CD8-positive, alpha-beta T cell (primary cell): ENCODE measurements at regions of chr1 and their contacts with region 1.

Region 1: DNA sequence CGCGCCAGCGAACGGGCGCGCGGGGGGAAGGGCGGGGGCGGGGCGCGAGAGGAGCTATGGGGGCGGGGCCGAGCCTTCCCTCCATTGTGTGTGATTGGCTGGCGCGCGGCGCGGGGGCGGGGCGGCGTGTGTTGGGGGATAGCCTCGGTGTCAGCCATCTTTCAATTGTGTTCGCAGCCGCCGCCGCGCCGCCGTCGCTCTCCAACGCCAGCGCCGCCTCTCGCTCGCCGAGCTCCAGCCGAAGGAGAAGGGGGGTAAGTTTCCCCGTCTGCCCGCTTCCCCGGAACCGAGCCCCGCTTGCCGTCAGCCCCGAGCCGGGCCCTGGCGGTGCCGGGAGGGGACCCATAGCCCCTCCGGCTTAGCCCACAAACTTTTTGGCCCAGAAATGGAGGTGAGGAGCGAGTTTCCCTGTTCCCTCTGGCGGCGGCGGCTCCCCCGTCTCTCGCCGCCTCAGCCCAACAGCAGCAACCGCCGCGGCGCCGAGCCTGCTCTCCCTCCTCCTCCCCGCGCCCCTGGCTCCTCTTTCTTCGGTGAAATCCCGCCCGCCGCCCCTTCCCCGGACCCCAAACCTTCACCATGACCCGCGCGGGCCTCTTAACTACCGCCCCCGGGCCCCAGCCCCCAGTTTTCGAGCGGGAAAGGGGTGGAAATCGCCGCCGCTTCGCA is at the start of gene H3-3A:
- DNase-seq: peak; percentile 96 to 99 (median 98)
- ATAC-seq: peak; percentile 85
- H3K4me3 ChIP-seq: peak within 1 kb of the TSS; percentile 84 to 92
- H3K4me3 Mint-ChIP-seq: peak within 1 kb of the TSS; percentile 100
- H3K27ac ChIP-seq: peak within 1 kb of the TSS; percentile 90 to 91
- H3K27ac Mint-ChIP-seq: peak within 1 kb of the TSS; percentile 100
- H3K4me1 ChIP-seq: peaks cover 42% of the 10 kb centered on the region
- H3K4me1 Mint-ChIP-seq: peaks cover 49% of the 10 kb centered on the region
- H3K27me3 ChIP-seq: no peaks in the 10 kb centered on the region
- H3K27me3 Mint-ChIP-seq: no peaks in the 10 kb centered on the region
- CTCF ChIP-seq: no peak
- total RNA-seq, gene H3-3A: 439 to 447 TPM

Region 2: GRCh38 chr1:225428068-225428880 is 634.4 kb before region 1 on chr1:
- CTCF ChIA-PET with region 1: no interaction called
- POLR2A ChIA-PET with region 1: interaction called, 6 read pairs
- intact Hi-C with region 1: loop called (anchors 2 to 5 kb)
- DNase-seq: peak; percentile 80 to 96 (median 91)
- ATAC-seq: peak; percentile 92
- H3K4me3 ChIP-seq: peak overlapping the region; percentile 80 to 89
- H3K4me3 Mint-ChIP-seq: peak overlapping the region; percentile 93
- H3K27ac ChIP-seq: peak overlapping the region; percentile 69 to 70
- H3K27ac Mint-ChIP-seq: peak overlapping the region; percentile 91
- H3K4me1 ChIP-seq: peaks cover 39% of the 10 kb centered on the region
- H3K4me1 Mint-ChIP-seq: peaks cover 44% of the 10 kb centered on the region
- H3K27me3 ChIP-seq: no peaks in the 10 kb centered on the region
- H3K27me3 Mint-ChIP-seq: no peaks in the 10 kb centered on the region
- CTCF ChIP-seq: no peak

Region 3: GRCh38 chr1:225474986-225475820 is 587.5 kb before region 1 on chr1:
- CTCF ChIA-PET with region 1: no interaction called
- POLR2A ChIA-PET with region 1: interaction called, 3 read pairs
- intact Hi-C with region 1: loop called in 1 of 2 experiments (anchors 5 kb)
- DNase-seq: peak; percentile 44 to 90 (median 70)
- ATAC-seq: peak; percentile 86
- H3K4me3 ChIP-seq: no peak overlapping the region
- H3K4me3 Mint-ChIP-seq: no peak overlapping the region
- H3K27ac ChIP-seq: no peak overlapping the region
- H3K27ac Mint-ChIP-seq: no peak overlapping the region
- H3K4me1 ChIP-seq: peaks cover 53% of the 10 kb centered on the region
- H3K4me1 Mint-ChIP-seq: peaks cover 48% of the 10 kb centered on the region
- H3K27me3 ChIP-seq: no peaks in the 10 kb centered on the region
- H3K27me3 Mint-ChIP-seq: no peaks in the 10 kb centered on the region
- CTCF ChIP-seq: peak; percentile 100

Region 4: DNA sequence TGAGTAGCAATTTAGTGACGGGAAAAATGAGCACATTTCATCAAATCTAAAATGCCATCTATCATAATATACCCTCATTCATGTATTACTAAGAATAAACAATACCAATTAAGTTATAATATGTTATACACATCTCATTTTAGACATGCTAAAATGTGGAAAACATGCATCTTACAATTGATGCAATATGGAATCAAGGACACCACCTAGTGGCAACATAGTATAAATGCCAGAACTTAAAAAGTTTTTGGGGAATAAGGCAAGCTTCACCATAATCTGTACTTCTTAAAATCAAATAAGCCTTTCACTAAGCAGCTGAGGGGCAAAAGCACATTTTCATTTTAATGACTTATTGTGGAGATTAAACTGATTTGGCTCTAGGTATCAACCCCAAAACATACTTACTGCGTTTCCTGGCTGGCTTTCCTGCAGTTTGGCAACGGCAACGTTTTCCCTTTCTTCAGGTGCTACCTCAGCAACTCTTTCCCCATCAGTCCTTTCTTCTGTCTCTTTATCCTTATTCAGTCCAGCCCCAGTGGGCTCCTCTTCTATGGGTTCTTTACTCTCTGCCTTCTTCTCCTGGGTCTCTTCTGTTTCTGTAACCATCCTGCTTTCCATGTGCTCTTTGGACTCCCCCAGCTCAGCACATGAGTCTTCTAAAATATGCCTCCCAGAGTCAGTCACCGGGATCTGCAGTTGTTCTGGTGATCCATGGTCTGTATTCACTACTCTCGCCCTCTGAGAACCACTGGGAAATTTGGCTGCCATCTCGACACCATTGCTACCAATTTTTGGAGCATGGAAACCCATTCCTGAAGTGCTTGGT is 75.0 kb before region 1 on chr1:
- CTCF ChIA-PET with region 1: interaction called, 31 read pairs
- POLR2A ChIA-PET with region 1: interaction called, 7 read pairs
- intact Hi-C with region 1: no loop called
- DNase-seq: peak in 2 of 9 experiments; percentile 53 to 66
- ATAC-seq: peak; percentile 79
- H3K4me3 ChIP-seq: no peak overlapping the region
- H3K4me3 Mint-ChIP-seq: no peak overlapping the region
- H3K27ac ChIP-seq: no peak overlapping the region
- H3K27ac Mint-ChIP-seq: peak overlapping the region; percentile 30
- H3K4me1 ChIP-seq: peaks cover 9% of the 10 kb centered on the region
- H3K4me1 Mint-ChIP-seq: peaks cover 28% of the 10 kb centered on the region
- H3K27me3 ChIP-seq: no peaks in the 10 kb centered on the region
- H3K27me3 Mint-ChIP-seq: no peaks in the 10 kb centered on the region
- CTCF ChIP-seq: peak; percentile 74

Region 5: DNA sequence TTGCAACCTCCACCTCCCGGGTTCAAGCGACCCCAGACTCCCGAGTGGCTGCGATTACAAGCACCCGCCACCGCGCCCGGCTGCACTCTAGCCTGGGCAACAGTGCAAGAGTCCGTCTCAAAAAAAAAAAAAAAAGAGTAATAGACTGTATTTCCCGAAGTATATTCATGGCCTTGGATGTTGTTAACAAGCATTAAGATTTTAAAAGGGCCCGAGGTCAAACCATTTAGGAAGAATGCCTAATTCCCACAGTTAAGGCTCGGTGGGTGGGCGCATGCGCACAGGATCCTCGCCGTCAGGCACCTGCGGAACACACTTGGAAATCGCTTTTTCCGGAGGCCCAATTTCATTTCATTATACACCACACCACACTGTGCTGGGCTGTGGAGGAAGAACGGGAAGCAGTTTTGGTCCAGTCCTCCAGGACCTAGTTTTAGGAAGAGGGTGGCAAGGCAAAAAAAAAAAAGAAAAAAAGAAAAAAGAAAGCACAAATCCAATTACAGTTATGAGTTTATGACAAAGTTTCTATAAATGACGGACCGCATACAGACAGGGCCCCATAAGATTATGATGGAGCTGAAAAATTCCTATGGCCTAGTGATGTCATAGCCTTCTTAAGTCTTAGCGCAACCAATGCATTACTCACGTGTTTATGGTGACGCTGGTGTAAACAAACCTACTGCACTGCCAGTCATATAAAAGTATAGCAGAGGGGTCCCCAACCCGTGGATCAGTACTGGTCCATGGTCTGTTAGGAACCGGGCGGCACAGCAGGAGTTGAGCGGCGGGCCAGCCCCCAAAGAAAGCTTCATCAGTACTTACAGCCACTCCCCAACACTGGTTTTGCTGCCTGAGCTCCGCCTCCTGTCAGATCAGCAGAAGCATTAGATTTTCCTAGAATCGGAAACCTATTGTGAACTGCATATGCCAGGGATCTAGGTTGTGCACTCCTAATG is 38.0 kb after region 1 on chr1:
- CTCF ChIA-PET with region 1: interaction called, 11 read pairs
- POLR2A ChIA-PET with region 1: interaction called, 4 read pairs
- intact Hi-C with region 1: no loop called
- DNase-seq: peak in 7 of 9 experiments; percentile 29 to 63 (median 53)
- ATAC-seq: peak; percentile 72
- H3K4me3 ChIP-seq: peak overlapping the region; percentile 50 to 53
- H3K4me3 Mint-ChIP-seq: peak overlapping the region; percentile 87
- H3K27ac ChIP-seq: no peak overlapping the region
- H3K27ac Mint-ChIP-seq: peak overlapping the region; percentile 77
- H3K4me1 ChIP-seq: peaks cover 4% of the 10 kb centered on the region
- H3K4me1 Mint-ChIP-seq: peaks cover 15% of the 10 kb centered on the region
- H3K27me3 ChIP-seq: no peaks in the 10 kb centered on the region
- H3K27me3 Mint-ChIP-seq: no peaks in the 10 kb centered on the region
- CTCF ChIP-seq: no peak

Region 6: DNA sequence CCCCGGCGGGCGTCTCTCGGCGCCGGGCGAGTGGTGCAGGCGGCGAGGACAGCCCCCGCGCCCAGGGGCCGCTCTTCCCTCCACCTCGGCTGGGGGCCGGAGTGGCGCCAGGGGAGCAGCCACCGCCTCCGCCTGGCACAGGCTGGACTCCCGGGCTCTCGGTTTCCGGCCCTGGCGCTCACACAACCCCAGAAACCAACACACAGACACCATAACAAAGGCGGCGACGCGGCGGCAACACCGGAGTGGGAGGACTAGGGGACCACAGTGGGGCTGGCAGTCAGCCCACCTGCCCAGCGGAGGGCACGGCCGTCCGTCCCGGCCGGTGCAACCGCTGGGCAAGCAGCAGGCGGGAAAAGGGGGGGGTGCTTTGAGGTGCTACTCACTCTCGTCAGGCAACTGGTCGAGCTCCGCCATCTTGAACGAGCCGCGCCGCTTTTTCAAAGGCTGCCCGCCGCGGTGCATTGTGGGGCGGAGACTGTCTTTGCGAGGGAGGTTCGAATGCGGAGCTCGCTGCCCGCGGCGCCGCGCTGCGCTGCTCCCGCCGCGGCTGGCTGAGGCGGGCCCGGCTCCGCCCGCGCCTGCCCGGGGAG is 246.1 kb after region 1 on chr1 and contains the start of gene LIN9:
- CTCF ChIA-PET with region 1: no interaction called
- POLR2A ChIA-PET with region 1: interaction called, 3 read pairs
- intact Hi-C with region 1: loop called in 1 of 2 experiments (anchors 1 kb)
- DNase-seq: peak; percentile 82 to 94 (median 91)
- ATAC-seq: peak; percentile 90
- H3K4me3 ChIP-seq: peak within 1 kb of the TSS; percentile 91 to 99
- H3K4me3 Mint-ChIP-seq: peak within 1 kb of the TSS; percentile 95
- H3K27ac ChIP-seq: peak within 1 kb of the TSS; percentile 49 to 56
- H3K27ac Mint-ChIP-seq: peak within 1 kb of the TSS; percentile 86
- H3K4me1 ChIP-seq: peaks cover 14% of the 10 kb centered on the region
- H3K4me1 Mint-ChIP-seq: peaks cover 22% of the 10 kb centered on the region
- H3K27me3 ChIP-seq: peaks cover 0 to 8% of the 10 kb centered on the region in 2 experiments
- H3K27me3 Mint-ChIP-seq: peaks cover 8% of the 10 kb centered on the region
- CTCF ChIP-seq: no peak
- total RNA-seq, gene LIN9: 1.1 to 1.3 TPM

Region 7: DNA sequence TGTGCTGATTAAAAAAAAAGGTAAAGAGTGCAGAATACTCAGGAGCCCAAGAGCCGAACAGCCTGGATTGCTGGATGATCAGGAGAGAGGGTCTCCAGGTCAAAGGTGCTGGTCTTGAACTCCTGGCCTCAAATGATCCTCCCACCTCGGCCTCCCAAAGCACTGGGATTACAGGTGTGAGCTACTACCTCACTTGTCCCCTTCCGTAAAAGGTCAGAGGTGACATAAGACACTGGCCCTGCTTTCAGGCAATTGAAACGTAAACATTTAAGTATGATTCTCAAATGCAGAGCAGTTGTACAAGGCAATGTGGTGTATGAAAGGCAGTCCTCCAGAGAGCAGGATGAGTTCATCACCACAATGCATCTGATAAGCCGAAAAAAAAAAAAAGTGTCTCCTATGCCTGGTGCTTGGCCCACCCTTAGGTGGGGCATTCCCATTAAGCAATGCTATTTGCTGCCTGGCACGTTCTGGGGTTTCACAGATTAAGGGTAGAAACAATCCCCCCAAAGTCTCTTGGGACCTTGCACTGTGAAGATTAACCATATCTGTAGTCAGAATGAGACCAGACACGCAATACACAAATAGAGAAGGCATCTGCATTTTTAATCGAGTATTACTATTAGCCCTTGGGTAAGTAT is 297.5 kb after region 1 on chr1:
- CTCF ChIA-PET with region 1: no interaction called
- POLR2A ChIA-PET with region 1: no interaction called
- intact Hi-C with region 1: no loop called
- DNase-seq: no peak
- ATAC-seq: no peak
- H3K4me3 ChIP-seq: no peak overlapping the region
- H3K4me3 Mint-ChIP-seq: no peak overlapping the region
- H3K27ac ChIP-seq: no peak overlapping the region
- H3K27ac Mint-ChIP-seq: no peak overlapping the region
- H3K4me1 ChIP-seq: no peaks in the 10 kb centered on the region
- H3K4me1 Mint-ChIP-seq: no peaks in the 10 kb centered on the region
- H3K27me3 ChIP-seq: no peaks in the 10 kb centered on the region
- H3K27me3 Mint-ChIP-seq: no peaks in the 10 kb centered on the region
- CTCF ChIP-seq: no peak